ENCODE measurements at regions of chr2 and their contacts with region 1.

Region 1: DNA sequence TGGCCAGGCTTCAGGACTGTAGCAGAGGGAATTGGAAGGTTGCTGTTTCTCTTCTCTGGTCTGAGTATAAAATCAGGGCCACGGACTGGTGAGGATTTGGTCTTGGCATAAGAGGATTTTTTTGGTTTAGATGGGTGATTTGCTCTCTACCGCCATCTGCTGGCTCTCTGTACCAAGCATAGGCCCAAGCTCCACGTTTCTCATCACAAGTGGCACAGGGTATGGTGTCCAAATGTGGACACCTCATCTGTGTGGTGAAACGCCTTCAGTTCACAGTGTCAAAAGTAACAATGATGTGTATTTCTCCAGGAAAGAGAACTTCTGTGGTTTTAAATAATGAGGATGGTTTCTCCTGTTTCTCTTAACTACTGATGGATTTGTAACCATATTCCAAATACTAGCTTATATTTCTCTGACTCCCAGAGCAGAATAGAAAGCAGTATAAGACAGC is 115.1 kb downstream of the EML6 start:
- DNase-seq: peak; percentile 57
- CTCF ChIP-seq: peak; percentile 90

Region 2: GRCh38 chr2:54665436-54665856 is 173.2 kb before region 1 on chr2:
- CTCF ChIA-PET with region 1: interaction called, 10 read pairs
- POLR2A ChIA-PET with region 1: no interaction called
- DNase-seq: peak; percentile 38
- CTCF ChIP-seq: peak; percentile 54

Region 3: GRCh38 chr2:54801352-54801751 is 37.3 kb before region 1 on chr2:
- CTCF ChIA-PET with region 1: interaction called, 19 read pairs
- POLR2A ChIA-PET with region 1: no interaction called
- DNase-seq: no peak
- CTCF ChIP-seq: no peak

Region 4: DNA sequence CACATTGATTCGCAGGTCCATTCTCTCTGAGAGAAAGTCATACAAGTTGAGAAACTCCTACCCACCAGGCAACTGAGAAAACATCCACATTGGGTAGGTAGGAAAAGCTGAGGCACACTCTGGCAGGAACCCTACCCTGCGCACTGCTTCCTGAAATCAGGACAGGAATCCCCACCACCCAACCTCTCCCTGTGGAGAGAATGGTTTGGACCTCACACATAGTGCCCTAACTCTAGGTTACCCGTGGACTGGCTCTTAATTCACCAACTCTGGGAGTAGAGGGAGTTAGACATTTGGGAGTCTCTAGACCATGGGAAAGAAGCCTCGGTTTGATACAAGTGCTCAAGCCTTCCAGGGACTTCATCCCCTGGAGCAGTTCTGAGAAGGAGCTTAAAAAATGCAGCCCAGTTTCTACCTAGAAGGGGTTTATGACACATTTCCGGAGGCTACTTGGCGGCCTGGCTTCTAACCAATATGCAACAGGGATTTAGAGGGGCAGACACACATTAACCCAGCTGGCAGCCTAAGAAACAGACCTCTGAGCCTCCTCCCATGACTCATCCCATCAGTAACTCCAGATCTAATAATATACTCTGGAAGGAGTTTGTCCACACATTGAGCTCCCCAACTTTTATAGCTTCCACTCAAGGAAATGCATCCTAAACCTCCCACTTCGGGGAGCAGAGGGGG is 21.5 kb after region 1 on chr2:
- CTCF ChIA-PET with region 1: interaction called, 19 read pairs
- POLR2A ChIA-PET with region 1: no interaction called
- DNase-seq: no peak
- CTCF ChIP-seq: no peak